Activated CD4-positive, alpha-beta memory T cell treated with anti-CD3 and anti-CD28 coated beads for 36 hours (primary cell): ENCODE measurements at regions of chr14 and their contacts with region 1.

Region 1: DNA sequence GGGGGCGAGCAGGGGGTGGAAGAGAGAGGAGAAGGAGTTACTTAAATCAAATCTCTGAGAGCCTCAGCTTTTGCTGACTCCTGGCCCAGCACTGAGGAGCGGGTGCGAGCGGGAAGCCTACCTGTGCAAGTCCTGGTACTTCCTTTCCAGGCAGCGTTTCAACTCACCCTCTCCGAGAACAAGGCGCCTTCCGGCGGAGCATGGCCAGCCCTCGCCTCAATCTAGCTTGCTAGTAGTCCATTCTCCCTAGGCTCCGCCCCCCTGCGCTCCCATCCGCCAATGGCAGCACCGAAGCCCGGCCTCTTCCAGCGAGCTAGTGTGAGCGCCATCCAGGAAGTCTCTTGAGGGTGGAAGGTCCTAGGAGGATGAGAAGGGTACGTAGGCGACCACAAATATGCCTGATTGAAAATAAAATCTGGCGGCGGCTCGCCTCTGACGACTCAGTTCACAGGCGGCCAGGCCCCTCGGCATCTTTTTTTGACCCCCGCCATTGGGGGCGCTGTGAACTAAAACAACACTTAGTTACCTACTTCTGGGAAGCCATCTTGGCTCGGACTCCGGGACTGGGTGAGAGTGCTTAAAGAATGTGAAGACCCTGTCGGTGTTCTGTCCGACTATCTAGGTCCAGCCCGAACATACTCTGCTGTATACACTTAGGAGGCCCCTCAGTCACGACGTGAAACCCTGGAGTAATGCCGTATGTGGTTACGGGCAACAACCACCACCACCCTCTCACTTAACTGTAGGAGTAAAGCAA is at the start of gene CHD8:
- DNase-seq: peak; percentile 100
- H3K4me3 Mint-ChIP-seq: peak within 1 kb of the TSS; percentile 91
- H3K27ac Mint-ChIP-seq: peak within 1 kb of the TSS; percentile 98
- H3K4me1 Mint-ChIP-seq: peaks cover 31% of the 10 kb centered on the region
- H3K27me3 Mint-ChIP-seq: no peaks in the 10 kb centered on the region
- total RNA-seq, gene CHD8: 80.1 to 87.7 TPM

Region 2: GRCh38 chr14:21136024-21136423 is 320.1 kb before region 1 on chr14:
- CTCF ChIA-PET with region 1: no interaction called
- POLR2A ChIA-PET with region 1: no interaction called
- intact Hi-C with region 1: no loop called
- DNase-seq: no peak
- H3K4me3 Mint-ChIP-seq: no peak overlapping the region
- H3K27ac Mint-ChIP-seq: no peak overlapping the region
- H3K4me1 Mint-ChIP-seq: no peaks in the 10 kb centered on the region
- H3K27me3 Mint-ChIP-seq: no peaks in the 10 kb centered on the region

Region 3: GRCh38 chr14:21263656-21264411 is 192.3 kb before region 1 on chr14:
- CTCF ChIA-PET with region 1: no interaction called
- POLR2A ChIA-PET with region 1: no interaction called
- intact Hi-C with region 1: loop called (anchors 1 kb)
- DNase-seq: no peak
- H3K4me3 Mint-ChIP-seq: peak overlapping the region; percentile 100
- H3K27ac Mint-ChIP-seq: peak overlapping the region; percentile 100
- H3K4me1 Mint-ChIP-seq: peaks cover 67% of the 10 kb centered on the region
- H3K27me3 Mint-ChIP-seq: no peaks in the 10 kb centered on the region

Region 4: GRCh38 chr14:21308479-21309237 is 147.4 kb before region 1 on chr14:
- CTCF ChIA-PET with region 1: no interaction called
- POLR2A ChIA-PET with region 1: no interaction called
- intact Hi-C with region 1: loop called (anchors 2 kb)
- DNase-seq: peak; percentile 91
- H3K4me3 Mint-ChIP-seq: peak overlapping the region; percentile 70
- H3K27ac Mint-ChIP-seq: peak overlapping the region; percentile 80
- H3K4me1 Mint-ChIP-seq: peaks cover 18% of the 10 kb centered on the region
- H3K27me3 Mint-ChIP-seq: no peaks in the 10 kb centered on the region

Region 5: GRCh38 chr14:21414137-21414631 is 41.9 kb before region 1 on chr14:
- CTCF ChIA-PET with region 1: interaction called, 12 read pairs
- POLR2A ChIA-PET with region 1: interaction called, 4 read pairs
- intact Hi-C with region 1: loop called (anchors 1 kb)
- DNase-seq: no peak
- H3K4me3 Mint-ChIP-seq: no peak overlapping the region
- H3K27ac Mint-ChIP-seq: peak overlapping the region; percentile 89
- H3K4me1 Mint-ChIP-seq: peaks cover 30% of the 10 kb centered on the region
- H3K27me3 Mint-ChIP-seq: no peaks in the 10 kb centered on the region

Region 6: GRCh38 chr14:21476925-21477681 is 21.0 kb after region 1 on chr14 and contains the starts of genes RAB2B and TOX4:
- CTCF ChIA-PET with region 1: interaction called, 34 read pairs
- POLR2A ChIA-PET with region 1: interaction called, 5 read pairs
- intact Hi-C with region 1: loop called (anchors 1 kb)
- DNase-seq: peak; percentile 97
- H3K4me3 Mint-ChIP-seq: peak within 1 kb of the TSS; percentile 99
- H3K27ac Mint-ChIP-seq: peak within 1 kb of the TSS; percentile 95
- H3K4me1 Mint-ChIP-seq: peaks cover 31% of the 10 kb centered on the region
- H3K27me3 Mint-ChIP-seq: no peaks in the 10 kb centered on the region
- total RNA-seq, gene RAB2B: 21.2 to 23.6 TPM
- total RNA-seq, gene TOX4: 66.1 to 67.5 TPM

Region 7: GRCh38 chr14:21510735-21511657 is 54.9 kb after region 1 on chr14 and contains the start of gene METTL3:
- CTCF ChIA-PET with region 1: interaction called, 11 read pairs
- POLR2A ChIA-PET with region 1: interaction called, 4 read pairs
- intact Hi-C with region 1: loop called (anchors 1 kb)
- DNase-seq: peak; percentile 96
- H3K4me3 Mint-ChIP-seq: peak within 1 kb of the TSS; percentile 99
- H3K27ac Mint-ChIP-seq: peak within 1 kb of the TSS; percentile 96
- H3K4me1 Mint-ChIP-seq: peaks cover 39% of the 10 kb centered on the region
- H3K27me3 Mint-ChIP-seq: no peaks in the 10 kb centered on the region
- total RNA-seq, gene METTL3: 64.1 TPM

Region 8: GRCh38 chr14:22589096-22589839 is 1133.2 kb after region 1 on chr14 and contains the start of gene DAD1:
- CTCF ChIA-PET with region 1: no interaction called
- POLR2A ChIA-PET with region 1: no interaction called
- intact Hi-C with region 1: loop called (anchors 10 kb)
- DNase-seq: peak; percentile 100
- H3K4me3 Mint-ChIP-seq: peak within 1 kb of the TSS; percentile 99
- H3K27ac Mint-ChIP-seq: peak within 1 kb of the TSS; percentile 100
- H3K4me1 Mint-ChIP-seq: peaks cover 64% of the 10 kb centered on the region
- H3K27me3 Mint-ChIP-seq: peaks cover 5% of the 10 kb centered on the region
- total RNA-seq, gene DAD1: 292 to 305 TPM